ENCODE measurements at regions of chr5 and their contacts with region 1.

Region 1: DNA sequence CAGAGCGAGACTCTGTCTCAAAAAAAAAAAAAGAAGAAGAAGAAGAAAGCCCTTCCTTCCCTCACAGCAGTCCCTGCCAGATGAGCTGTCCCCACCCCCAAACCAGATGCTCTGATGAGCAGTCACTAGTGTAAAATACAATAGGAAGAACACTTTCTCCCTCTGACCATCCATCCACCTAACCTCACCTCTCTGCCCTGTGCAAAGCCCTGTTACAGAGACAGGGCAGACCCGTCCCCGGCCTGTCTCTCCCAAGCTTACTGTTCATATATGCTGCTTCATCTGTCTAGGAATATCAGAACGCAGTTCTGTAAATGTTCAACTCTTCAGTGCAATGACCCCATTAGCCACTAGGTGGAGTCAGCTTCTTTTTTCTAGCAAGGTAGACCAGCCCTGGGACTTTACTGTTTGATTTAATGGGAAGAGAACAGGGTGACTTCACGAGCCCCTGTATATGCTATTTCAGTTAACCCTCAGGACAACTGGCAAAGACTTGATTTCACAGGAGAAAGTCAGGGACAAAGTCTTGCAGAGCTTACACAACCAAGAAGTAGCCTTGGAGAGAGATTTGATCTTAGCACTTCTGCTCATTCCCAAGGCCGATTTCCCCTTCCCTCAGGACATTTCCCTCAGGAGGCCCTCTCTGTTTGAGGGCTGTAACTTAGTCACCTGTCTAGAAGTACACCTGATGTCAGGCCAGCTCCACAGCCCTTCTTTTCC is 14.9 kb upstream of the FGFR4 start:
- DNase-seq: peak; percentile 75
- CTCF ChIP-seq: peak; percentile 88

Region 2: DNA sequence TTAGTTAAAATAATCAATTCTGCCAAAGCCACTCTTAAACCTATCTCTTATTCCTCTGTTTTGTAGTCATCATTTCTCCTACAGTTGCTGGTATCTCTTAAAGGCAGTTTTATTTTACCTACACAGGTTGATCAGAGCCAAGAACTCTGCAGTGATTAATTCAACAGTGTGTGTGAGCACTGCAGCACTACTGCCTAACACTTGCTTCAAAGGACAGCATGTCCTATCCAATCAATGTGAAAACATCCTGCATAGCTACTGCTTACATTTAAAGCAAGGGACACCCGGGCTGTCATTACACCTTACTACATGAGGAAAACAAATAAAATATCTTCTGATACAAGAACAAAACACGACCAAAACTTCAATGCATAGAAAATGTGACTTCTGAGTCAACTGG is 127.5 kb before region 1 on chr5:
- CTCF ChIA-PET with region 1: no interaction called
- POLR2A ChIA-PET with region 1: no interaction called
- DNase-seq: no peak
- CTCF ChIP-seq: no peak

Region 3: DNA sequence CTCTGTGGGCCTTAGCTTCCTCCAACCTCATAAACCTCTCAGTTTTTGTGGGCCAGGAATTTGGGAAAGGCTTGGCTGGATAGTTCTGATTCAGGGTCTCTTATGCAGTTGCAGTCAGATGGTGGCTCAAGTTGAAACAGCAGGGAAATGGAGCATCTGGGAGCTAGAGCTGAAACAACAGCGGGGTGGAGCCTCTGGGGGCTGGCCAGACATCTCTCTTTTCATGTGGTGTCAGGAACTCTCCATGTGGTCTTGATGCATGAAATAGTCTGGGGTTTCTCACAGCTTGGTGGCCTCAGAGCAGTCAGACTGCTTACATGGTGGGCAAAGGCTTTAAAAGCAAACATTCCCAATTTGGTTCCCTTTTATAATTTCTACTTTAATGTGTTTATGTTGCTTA is 35.9 kb before region 1 on chr5:
- CTCF ChIA-PET with region 1: interaction called, 23 read pairs
- POLR2A ChIA-PET with region 1: no interaction called
- DNase-seq: peak; percentile 37
- CTCF ChIP-seq: no peak

Region 4: DNA sequence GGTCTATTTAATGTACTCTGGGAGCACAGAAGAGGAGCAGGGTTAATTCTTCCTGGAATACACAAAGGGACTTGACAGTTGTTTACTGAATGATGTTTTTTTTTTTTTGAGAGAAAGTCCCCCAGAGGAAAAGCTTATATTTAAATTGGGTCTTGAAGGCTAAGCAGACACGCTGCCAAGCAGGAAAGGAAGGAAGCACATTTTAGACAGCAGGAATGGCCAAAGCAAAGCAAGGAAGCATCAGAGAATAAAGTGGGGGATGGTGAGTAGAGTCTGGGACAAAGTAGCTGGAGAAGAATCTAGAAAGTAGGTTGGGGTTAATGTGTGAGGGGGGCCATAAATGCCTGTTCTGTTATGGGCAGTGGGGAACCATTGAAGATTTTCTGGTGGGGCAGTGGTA is 27.9 kb before region 1 on chr5:
- CTCF ChIA-PET with region 1: interaction called, 19 read pairs
- POLR2A ChIA-PET with region 1: no interaction called
- DNase-seq: no peak
- CTCF ChIP-seq: no peak

Region 5: DNA sequence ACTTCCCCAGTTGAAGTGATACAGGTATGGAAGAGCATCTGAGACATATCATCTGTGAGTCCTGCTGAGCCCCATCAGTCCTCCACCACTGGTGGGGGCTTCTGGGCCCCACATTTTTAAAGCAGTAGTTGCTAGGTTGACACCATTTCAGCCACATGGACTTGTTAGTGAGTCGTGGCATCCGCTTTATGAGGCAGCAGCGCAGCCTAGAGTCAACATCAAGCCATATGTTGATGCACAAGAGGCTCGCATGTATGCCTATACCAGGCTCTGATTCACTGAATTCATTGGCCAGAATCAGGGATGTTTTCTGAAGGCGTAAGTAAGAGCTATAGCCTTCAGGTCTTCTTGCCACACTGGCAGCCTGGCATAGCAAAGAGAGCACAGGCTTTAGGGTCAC is 22.5 kb before region 1 on chr5:
- CTCF ChIA-PET with region 1: interaction called, 45 read pairs
- POLR2A ChIA-PET with region 1: interaction called, 4 read pairs
- DNase-seq: no peak
- CTCF ChIP-seq: peak; percentile 11

Region 6: GRCh38 chr5:177086924-177087706 is 15.3 kb after region 1 on chr5:
- CTCF ChIA-PET with region 1: interaction called, 80 read pairs
- POLR2A ChIA-PET with region 1: no interaction called
- DNase-seq: peak; percentile 85
- CTCF ChIP-seq: peak; percentile 69